A673 (cell line): ENCODE measurements at regions of chr19 and their contacts with region 1.

Region 1: DNA sequence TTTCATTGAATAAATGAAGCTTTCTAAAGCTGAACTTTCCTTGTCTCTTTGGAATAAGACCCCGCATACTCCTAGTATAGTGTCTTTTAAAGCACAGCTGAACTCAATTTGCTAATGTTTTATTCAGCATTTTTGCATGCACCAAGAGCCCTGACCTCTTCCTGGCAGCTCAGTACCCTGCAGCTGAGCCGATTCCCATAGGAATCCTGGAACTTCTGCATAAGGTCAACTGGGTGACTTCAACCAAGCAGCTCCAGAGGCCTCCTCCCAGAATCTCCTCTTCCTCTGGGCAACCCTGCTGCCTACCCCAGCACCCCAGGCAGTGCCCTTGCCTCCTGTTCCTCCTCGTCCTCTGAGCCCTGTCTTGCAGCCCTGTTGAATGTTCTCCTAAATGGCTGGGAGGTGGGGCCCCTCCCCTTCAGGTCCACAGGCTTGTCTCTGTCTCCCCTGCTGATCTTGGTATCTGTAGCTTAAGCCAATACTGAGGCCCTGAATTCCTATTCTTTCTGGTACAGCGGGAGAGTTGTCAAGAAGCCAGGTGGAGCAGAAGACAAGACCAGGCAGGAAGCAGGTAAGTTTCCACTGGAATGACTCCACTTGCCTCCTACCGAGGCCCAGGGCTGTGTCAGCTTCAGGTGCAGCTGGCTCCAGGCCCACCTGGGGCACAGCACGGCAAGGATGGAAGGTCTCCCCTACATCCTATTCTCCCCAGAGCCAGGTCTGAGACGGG is 23.6 kb upstream of the CCDC124 start:
- DNase-seq: no peak
- H3K4me3 ChIP-seq: no peak overlapping the region
- H3K27ac ChIP-seq: no peak overlapping the region
- H3K4me1 ChIP-seq: no peaks in the 10 kb centered on the region
- H3K27me3 ChIP-seq: no peaks in the 10 kb centered on the region
- CTCF ChIP-seq: no peak

Region 2: GRCh38 chr19:17358395-17358794 is 550.8 kb before region 1 on chr19:
- CTCF ChIA-PET with region 1: no interaction called
- POLR2A ChIA-PET with region 1: no interaction called
- intact Hi-C with region 1: no loop called
- DNase-seq: no peak
- H3K4me3 ChIP-seq: no peak overlapping the region
- H3K27ac ChIP-seq: no peak overlapping the region
- H3K4me1 ChIP-seq: no peaks in the 10 kb centered on the region
- H3K27me3 ChIP-seq: no peaks in the 10 kb centered on the region
- CTCF ChIP-seq: no peak

Region 3: DNA sequence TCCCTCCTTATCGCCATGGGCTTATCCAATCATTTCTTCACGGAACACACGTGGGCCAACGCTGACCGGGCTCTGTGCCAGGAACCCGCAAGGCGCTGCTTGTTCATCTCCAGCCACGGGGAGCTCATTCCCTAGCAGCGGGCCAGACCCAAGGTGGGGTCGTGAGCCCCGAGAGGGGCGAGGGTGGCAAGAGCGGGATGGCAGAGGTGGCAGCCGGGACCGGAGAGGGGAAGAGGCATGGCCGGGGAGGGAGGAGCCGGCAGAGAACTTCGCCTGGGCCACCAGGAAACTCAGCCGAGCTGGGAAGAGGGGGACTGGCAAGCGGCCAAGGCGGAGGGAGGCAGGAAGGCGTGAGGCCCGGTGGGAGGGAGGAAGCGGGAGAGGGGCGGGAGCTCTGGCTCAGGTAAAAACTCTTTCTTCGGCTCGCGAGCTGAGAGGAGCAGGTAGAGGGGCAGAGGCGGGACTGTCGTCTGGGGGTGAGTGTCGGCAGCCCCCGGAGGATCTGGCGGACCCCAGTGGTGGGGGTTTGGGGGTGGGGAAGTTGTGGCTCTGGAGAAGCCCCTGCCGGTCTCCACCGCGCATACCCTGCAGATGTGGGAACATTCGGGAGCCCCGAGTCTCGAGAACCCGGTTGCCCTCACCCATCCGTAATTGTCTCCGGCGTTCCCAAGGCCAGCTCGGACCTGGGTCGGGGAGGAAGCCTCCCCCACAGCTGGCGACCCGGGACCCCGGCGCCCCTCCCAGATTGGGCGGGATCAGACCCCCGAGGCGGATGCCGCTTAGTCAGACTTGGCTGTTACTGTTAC is 114.2 kb before region 1 on chr19 and contains the start of gene B3GNT3:
- CTCF ChIA-PET with region 1: no interaction called
- POLR2A ChIA-PET with region 1: no interaction called
- intact Hi-C with region 1: no loop called
- DNase-seq: peak; percentile 69
- H3K4me3 ChIP-seq: peak within 1 kb of the TSS; percentile 19
- H3K27ac ChIP-seq: no peak within 1 kb of the TSS
- H3K4me1 ChIP-seq: peaks cover 26% of the 10 kb centered on the region
- H3K27me3 ChIP-seq: peaks cover 17% of the 10 kb centered on the region
- CTCF ChIP-seq: no peak
- total RNA-seq, gene B3GNT3: not detected in 2 replicates

Region 4: GRCh38 chr19:17854061-17854460 is 55.1 kb before region 1 on chr19:
- CTCF ChIA-PET with region 1: no interaction called
- POLR2A ChIA-PET with region 1: interaction called, 18 read pairs
- intact Hi-C with region 1: no loop called
- DNase-seq: no peak
- H3K4me3 ChIP-seq: no peak overlapping the region
- H3K27ac ChIP-seq: no peak overlapping the region
- H3K4me1 ChIP-seq: no peaks in the 10 kb centered on the region
- H3K27me3 ChIP-seq: no peaks in the 10 kb centered on the region
- CTCF ChIP-seq: no peak

Region 5: GRCh38 chr19:17922138-17922537 is 13.0 kb after region 1 on chr19:
- CTCF ChIA-PET with region 1: no interaction called
- POLR2A ChIA-PET with region 1: no interaction called
- intact Hi-C with region 1: no loop called
- DNase-seq: no peak
- H3K4me3 ChIP-seq: no peak overlapping the region
- H3K27ac ChIP-seq: no peak overlapping the region
- H3K4me1 ChIP-seq: no peaks in the 10 kb centered on the region
- H3K27me3 ChIP-seq: no peaks in the 10 kb centered on the region
- CTCF ChIP-seq: no peak